PC-3 (cell line): ENCODE measurements at regions of chr17 and their contacts with region 1.

Region 1: GRCh38 chr17:21043286-21044232 is 748 bp upstream of the USP22 start:
- DNase-seq: peak; percentile 99
- ATAC-seq: peak; percentile 93
- H3K4me3 ChIP-seq: peak overlapping the region; percentile 71
- H3K27ac ChIP-seq: peak overlapping the region; percentile 87
- H3K4me1 ChIP-seq: peaks cover 15% of the 10 kb centered on the region
- H3K27me3 ChIP-seq: no peaks in the 10 kb centered on the region
- CTCF ChIP-seq: peak; percentile 96

Region 2: GRCh38 chr17:20284570-20285295 is 758.8 kb before region 1 on chr17:
- CTCF ChIA-PET with region 1: no interaction called
- POLR2A ChIA-PET with region 1: no interaction called
- intact Hi-C with region 1: no loop called
- DNase-seq: no peak
- ATAC-seq: no peak
- H3K4me3 ChIP-seq: no peak overlapping the region
- H3K27ac ChIP-seq: no peak overlapping the region
- H3K4me1 ChIP-seq: no peaks in the 10 kb centered on the region
- H3K27me3 ChIP-seq: no peaks in the 10 kb centered on the region
- CTCF ChIP-seq: no peak

Region 3: GRCh38 chr17:21014993-21015392 is 28.6 kb before region 1 on chr17:
- CTCF ChIA-PET with region 1: no interaction called
- POLR2A ChIA-PET with region 1: interaction called, 10 read pairs
- intact Hi-C with region 1: no loop called
- DNase-seq: no peak
- ATAC-seq: no peak
- H3K4me3 ChIP-seq: no peak overlapping the region
- H3K27ac ChIP-seq: no peak overlapping the region
- H3K4me1 ChIP-seq: no peaks in the 10 kb centered on the region
- H3K27me3 ChIP-seq: no peaks in the 10 kb centered on the region
- CTCF ChIP-seq: no peak

Region 4: GRCh38 chr17:21089145-21089544 is 45.6 kb after region 1 on chr17:
- CTCF ChIA-PET with region 1: no interaction called
- POLR2A ChIA-PET with region 1: no interaction called
- intact Hi-C with region 1: loop called (anchors 2 kb)
- DNase-seq: peak; percentile 88
- ATAC-seq: peak; percentile 96
- H3K4me3 ChIP-seq: no peak overlapping the region
- H3K27ac ChIP-seq: peak overlapping the region; percentile 67
- H3K4me1 ChIP-seq: peaks cover 15% of the 10 kb centered on the region
- H3K27me3 ChIP-seq: no peaks in the 10 kb centered on the region
- CTCF ChIP-seq: no peak

Region 5: GRCh38 chr17:21098934-21099689 is 55.6 kb after region 1 on chr17:
- CTCF ChIA-PET with region 1: interaction called, 21 read pairs
- POLR2A ChIA-PET with region 1: interaction called, 5 read pairs
- intact Hi-C with region 1: loop called (anchors 1 kb)
- DNase-seq: peak; percentile 95
- ATAC-seq: peak; percentile 99
- H3K4me3 ChIP-seq: peak overlapping the region; percentile 88
- H3K27ac ChIP-seq: peak overlapping the region; percentile 61
- H3K4me1 ChIP-seq: peaks cover 6% of the 10 kb centered on the region
- H3K27me3 ChIP-seq: no peaks in the 10 kb centered on the region
- CTCF ChIP-seq: no peak